Activated T-helper 2 cell treated with anti-CD3 and anti-CD28 coated beads, Interferon-gamma antibody, Interleukin-2, Interleukin-4, amounts not matched to agents 10 μg/mL and 5 μg/mL and 100 μg/mL, durations not matched to agents 14 hours and 24 hours and 36 hours (primary cell): ENCODE measurements at regions of chr10 and their contacts with region 1.

Region 1: DNA sequence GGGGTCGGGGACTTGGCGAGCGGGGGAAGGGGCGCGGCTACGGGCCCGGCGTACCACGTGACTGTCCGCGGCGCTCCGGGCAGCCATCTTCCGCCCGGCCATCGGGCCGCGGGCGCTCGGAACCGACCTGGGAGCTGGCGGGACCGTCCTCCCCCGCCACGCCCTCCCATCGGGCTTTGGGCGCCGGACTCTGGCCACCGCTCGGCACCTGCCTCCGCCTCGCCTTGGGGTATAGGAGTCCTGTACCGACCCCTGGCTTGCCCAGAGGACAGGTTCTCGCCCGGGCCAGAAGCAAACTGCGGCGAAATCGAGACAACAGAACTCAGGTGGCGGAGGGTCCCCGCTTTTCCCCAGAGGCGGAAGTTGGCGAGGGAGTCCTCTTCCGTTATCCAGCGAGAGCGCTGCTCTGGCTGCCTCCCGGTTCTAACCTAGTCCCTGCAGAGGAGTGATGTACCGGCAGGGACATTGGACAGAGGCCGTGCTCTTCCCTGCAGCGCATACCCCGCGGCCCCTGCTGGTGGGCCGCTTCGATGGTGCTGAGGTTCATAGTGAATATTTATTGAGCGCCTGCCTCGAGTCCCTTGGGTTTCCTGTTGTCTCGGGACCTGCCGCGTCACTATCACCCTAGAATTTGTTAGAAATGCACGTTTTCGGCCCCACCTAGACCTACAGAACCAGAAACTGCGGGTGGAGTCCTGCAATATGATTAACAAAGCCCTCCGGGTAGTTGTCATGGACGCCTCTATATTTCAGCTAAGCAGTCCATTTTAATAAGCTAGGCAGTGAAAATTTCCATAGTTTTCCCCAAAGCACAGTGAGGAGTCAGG is 1.3 kb upstream of the SGMS1 start:
- DNase-seq: peak; percentile 50
- H3K4me3 Mint-ChIP-seq: peak overlapping the region; percentile 83
- H3K27ac Mint-ChIP-seq: peak overlapping the region; percentile 77
- H3K4me1 Mint-ChIP-seq: peaks cover 36% of the 10 kb centered on the region
- H3K27me3 Mint-ChIP-seq: peaks cover 25% of the 10 kb centered on the region

Region 2: DNA sequence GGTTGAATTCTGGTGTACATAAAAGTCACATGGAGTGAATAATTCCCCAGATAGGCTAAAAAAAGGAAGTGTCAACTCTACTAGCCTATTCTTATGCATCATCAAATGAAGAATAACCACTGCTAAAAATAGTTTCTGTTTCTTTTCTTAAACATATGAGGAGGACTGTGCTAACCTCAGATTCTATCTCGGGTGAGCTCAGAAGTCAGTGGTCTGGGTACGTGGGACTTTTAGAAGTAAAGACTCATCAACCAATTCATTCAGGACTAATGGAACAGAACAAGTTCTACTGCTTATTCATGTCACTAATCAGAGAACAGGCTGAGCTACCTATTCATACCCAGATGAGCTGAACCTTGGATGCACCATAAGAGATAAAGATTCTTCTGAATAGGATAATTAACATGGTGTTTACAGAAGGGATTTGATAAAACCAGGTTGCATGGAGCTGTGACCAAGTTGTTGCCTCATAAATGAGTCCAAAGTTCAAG is 364.2 kb before region 1 on chr10:
- intact Hi-C with region 1: loop called (anchors 2 kb)
- DNase-seq: peak; percentile 22
- H3K4me3 Mint-ChIP-seq: no peak overlapping the region
- H3K27ac Mint-ChIP-seq: no peak overlapping the region
- H3K4me1 Mint-ChIP-seq: peaks cover 29% of the 10 kb centered on the region
- H3K27me3 Mint-ChIP-seq: peaks cover 60% of the 10 kb centered on the region

Region 3: GRCh38 chr10:50739618-50740292 is 114.7 kb after region 1 on chr10 and contains the start of gene ASAH2B:
- intact Hi-C with region 1: loop called (anchors 10 kb)
- DNase-seq: peak; percentile 52
- H3K4me3 Mint-ChIP-seq: peak within 1 kb of the TSS; percentile 98
- H3K27ac Mint-ChIP-seq: peak within 1 kb of the TSS; percentile 63
- H3K4me1 Mint-ChIP-seq: peaks cover 16% of the 10 kb centered on the region
- H3K27me3 Mint-ChIP-seq: peaks cover 31% of the 10 kb centered on the region
- total RNA-seq, gene ASAH2B: 2.6 and 5.9 TPM in 2 replicates